Posterior vena cava (tissue), 2 donors: ENCODE measurements at regions of chr4 and their contacts with region 1.

Region 1: DNA sequence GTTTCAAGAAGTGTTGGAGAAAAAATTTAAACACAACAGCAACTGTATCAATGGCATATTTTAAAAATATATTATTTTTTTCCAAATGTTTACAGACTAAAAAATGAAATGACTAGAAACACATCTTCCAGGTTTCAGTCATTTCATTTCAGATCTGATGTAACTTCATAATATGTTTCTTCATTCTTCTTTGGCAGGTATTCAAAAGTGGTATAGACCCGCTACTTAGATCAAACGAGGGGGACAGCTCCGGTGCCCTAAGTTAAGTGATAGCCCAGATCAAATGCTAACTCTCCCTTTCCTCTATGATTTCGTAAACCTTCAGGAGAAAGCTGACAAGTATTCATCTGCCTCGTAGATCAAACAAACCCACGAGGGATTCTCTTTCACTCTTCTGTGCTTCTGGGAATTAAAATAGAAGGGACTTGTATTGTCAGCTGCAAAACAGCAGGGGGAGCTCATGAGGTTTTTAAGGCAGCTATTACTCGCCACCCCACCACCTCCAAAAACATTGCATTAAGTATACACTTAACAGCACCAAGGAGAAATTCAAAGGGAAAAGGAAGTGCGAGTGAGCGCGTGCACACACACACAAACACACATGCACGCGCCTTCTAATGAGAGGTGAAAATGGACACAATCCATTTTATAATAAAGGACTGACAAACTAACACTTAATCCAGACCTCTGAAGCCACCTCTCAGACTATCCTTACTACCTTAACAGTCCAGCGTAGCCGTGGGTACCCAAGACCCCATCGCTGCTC is 21.4 kb downstream of the HELT start:
- DNase-seq: no peak

Region 2: GRCh38 chr4:185005216-185005819 is 34.4 kb before region 1 on chr4:
- intact Hi-C with region 1: no loop called
- DNase-seq: peak; percentile 93

Region 3: GRCh38 chr4:185096032-185096653 is 56.5 kb after region 1 on chr4:
- intact Hi-C with region 1: loop called (anchors 2 to 10 kb)
- DNase-seq: no peak

Region 4: GRCh38 chr4:185134307-185134869 is 94.7 kb after region 1 on chr4:
- intact Hi-C with region 1: loop called (anchors 2 to 5 kb)
- DNase-seq: no peak

Region 5: GRCh38 chr4:185171373-185172071 is 131.8 kb after region 1 on chr4:
- intact Hi-C with region 1: no loop called
- DNase-seq: no peak